ENCODE measurements at regions of chrX and their contacts with region 1.

Region 1: GRCh38 chrX:53071604-53072417 is 10.4 kb upstream of the TSPYL2 start:
- H3K4me3 ChIP-seq: peak overlapping the region; percentile 27
- H3K27ac ChIP-seq: no peak overlapping the region
- H3K4me1 ChIP-seq: no peaks in the 10 kb centered on the region
- CTCF ChIP-seq: peak; percentile 94

Region 2: DNA sequence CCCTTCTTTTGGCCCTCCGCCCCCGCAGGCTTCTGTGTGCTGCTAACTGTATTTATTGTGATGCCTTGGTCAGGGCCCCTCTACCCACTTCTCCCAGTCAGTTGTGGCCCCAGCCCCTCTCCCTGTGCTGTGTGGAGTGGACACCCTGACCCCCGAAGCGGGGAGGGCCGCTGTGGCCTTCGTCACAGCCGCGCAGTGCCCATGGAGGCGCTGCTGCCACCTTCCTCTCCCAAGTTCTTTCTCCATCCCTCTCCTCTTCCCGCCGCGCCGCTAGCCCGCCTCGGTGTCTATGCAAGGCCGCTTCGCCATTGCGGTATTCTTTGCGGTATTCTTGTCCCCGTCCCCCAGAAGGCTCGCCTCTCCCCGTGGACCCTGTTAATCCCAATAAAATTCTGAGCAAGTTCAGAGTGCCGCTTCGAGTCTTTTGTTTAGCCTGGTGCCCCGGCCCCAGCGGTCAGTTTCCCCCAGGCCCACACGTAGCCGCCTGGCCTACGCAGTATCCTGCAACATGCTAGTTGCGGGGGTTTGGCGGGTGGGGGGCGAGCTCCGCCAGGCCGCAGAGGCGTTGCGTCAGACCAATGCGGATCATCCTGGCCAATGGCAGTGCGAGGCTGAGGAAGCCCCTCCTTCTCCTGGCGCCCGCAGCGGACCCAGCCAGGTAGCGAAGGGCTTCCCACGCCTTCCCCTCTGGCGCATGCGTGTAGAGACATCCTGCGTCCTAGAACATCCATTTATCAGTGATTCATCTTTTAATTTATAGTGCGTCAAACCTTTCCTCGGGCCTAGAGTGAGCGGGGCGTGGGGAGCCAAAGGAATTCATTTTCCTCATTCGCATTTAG is 16.5 kb after region 1 on chrX:
- CTCF ChIA-PET with region 1: interaction called, 18 read pairs
- POLR2A ChIA-PET with region 1: interaction called, 3 read pairs
- H3K4me3 ChIP-seq: peak overlapping the region; percentile 26
- H3K27ac ChIP-seq: peak overlapping the region; percentile 49; the same call in 1 of the 2 replicates
- H3K4me1 ChIP-seq: no peaks in the 10 kb centered on the region
- CTCF ChIP-seq: no peak

Region 3: GRCh38 chrX:53383376-53384076 is 311.7 kb after region 1 on chrX:
- CTCF ChIA-PET with region 1: no interaction called
- POLR2A ChIA-PET with region 1: no interaction called
- H3K4me3 ChIP-seq: no peak overlapping the region
- H3K27ac ChIP-seq: peak overlapping the region; percentile 49; the same call in 1 of the 2 replicates
- H3K4me1 ChIP-seq: no peaks in the 10 kb centered on the region
- CTCF ChIP-seq: no peak